ENCODE measurements at regions of chr2 and their contacts with region 1.

Region 1: DNA sequence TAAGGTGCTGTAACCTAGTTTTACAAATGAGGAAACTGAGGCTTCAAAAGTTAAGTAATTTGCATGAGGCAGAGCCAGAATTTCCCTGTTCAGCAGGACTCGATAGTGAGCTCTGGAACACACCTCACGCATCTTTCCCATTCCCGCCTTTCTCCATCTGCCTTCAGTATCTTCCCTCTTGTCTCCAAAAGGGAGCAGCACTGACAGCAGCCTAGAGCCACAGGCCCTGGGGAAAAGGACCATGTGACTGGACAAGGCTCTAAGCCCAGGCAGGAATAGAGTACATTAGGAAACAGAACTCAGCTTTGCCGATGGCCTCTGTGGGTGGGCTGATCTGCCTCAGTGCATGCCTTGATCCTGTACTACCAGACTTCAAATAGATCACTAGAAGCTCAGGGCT is 21.5 kb downstream of the GPR155 start:
- DNase-seq: no peak
- H3K4me3 ChIP-seq: no peak overlapping the region
- H3K27ac ChIP-seq: no peak overlapping the region
- H3K4me1 ChIP-seq: no peaks in the 10 kb centered on the region
- H3K27me3 ChIP-seq: no peaks in the 10 kb centered on the region
- CTCF ChIP-seq: no peak

Region 2: GRCh38 chr2:174522553-174522952 is 57.2 kb after region 1 on chr2:
- CTCF ChIA-PET with region 1: interaction called, 8 read pairs
- dilution Hi-C with region 1: no loop called
- in situ Hi-C with region 1: no loop called
- intact Hi-C with region 1: loop called (anchors 1 kb)
- DNase-seq: no peak
- H3K4me3 ChIP-seq: no peak overlapping the region
- H3K27ac ChIP-seq: no peak overlapping the region
- H3K4me1 ChIP-seq: no peaks in the 10 kb centered on the region
- H3K27me3 ChIP-seq: no peaks in the 10 kb centered on the region
- CTCF ChIP-seq: peak; percentile 20 to 41

Region 3: GRCh38 chr2:174546581-174547506 is 81.5 kb after region 1 on chr2:
- CTCF ChIA-PET with region 1: interaction called, 6 read pairs
- dilution Hi-C with region 1: no loop called
- in situ Hi-C with region 1: no loop called
- intact Hi-C with region 1: loop called (anchors 1 kb)
- DNase-seq: peak; percentile 17
- H3K4me3 ChIP-seq: no peak overlapping the region
- H3K27ac ChIP-seq: no peak overlapping the region
- H3K4me1 ChIP-seq: no peaks in the 10 kb centered on the region
- H3K27me3 ChIP-seq: no peaks in the 10 kb centered on the region
- CTCF ChIP-seq: peak; percentile 35 to 56

Region 4: GRCh38 chr2:174603280-174603679 is 138.0 kb after region 1 on chr2:
- CTCF ChIA-PET with region 1: interaction called, 19 read pairs
- dilution Hi-C with region 1: no loop called
- in situ Hi-C with region 1: loop called in 1 of 2 experiments (anchors 10 kb)
- intact Hi-C with region 1: loop called (anchors 1 kb)
- DNase-seq: peak; percentile 60
- H3K4me3 ChIP-seq: no peak overlapping the region
- H3K27ac ChIP-seq: no peak overlapping the region
- H3K4me1 ChIP-seq: no peaks in the 10 kb centered on the region
- H3K27me3 ChIP-seq: no peaks in the 10 kb centered on the region
- CTCF ChIP-seq: peak; percentile 37 to 61

Region 5: DNA sequence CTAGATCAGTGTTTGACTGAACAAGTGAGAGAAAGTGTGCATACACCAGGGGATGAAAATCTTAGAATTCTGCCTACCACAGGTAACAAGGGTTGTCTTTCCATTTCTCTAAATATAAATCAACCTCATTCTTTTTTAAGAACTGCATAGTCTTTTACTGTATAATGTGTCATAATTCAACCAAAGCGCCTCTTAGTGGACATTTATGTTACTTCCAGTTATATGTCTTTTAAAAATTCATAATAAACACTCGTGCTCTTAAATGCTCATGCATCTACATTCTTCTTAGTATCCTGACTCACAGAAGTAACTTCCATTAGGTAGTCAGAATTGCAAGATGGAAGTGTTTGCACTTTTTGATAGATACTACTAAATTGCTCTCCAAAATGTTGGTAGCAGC is 222.8 kb after region 1 on chr2:
- CTCF ChIA-PET with region 1: interaction called, 7 read pairs
- dilution Hi-C with region 1: no loop called
- in situ Hi-C with region 1: loop called in 1 of 2 experiments (anchors 25 kb)
- intact Hi-C with region 1: loop called (anchors 1 kb)
- DNase-seq: peak; percentile 16
- H3K4me3 ChIP-seq: no peak overlapping the region
- H3K27ac ChIP-seq: no peak overlapping the region
- H3K4me1 ChIP-seq: no peaks in the 10 kb centered on the region
- H3K27me3 ChIP-seq: peaks cover 10% of the 10 kb centered on the region
- CTCF ChIP-seq: peak; percentile 38 to 42

Region 6: DNA sequence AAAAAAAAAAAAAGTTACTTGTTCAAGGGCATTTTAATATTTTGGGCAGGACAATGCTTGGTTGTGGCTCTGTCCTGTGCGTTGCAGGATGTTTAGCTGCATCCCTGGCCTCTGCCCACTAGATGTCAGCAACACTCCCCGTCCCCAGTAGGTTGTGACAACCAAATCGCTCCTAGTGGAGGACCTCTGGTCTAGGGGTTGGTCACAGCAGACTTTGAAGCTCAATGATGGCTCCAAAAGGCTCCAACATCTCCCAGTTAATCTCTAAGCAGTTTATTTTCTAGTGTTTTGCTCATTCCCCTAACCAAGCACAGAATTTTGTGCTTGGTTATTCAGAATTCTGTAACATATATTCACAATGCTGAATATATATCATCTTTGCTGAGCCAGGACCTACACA is 231.9 kb after region 1 on chr2:
- CTCF ChIA-PET with region 1: no interaction called
- dilution Hi-C with region 1: no loop called
- in situ Hi-C with region 1: loop called in 1 of 2 experiments (anchors 25 kb)
- intact Hi-C with region 1: no loop called
- DNase-seq: peak; percentile 40
- H3K4me3 ChIP-seq: no peak overlapping the region
- H3K27ac ChIP-seq: no peak overlapping the region
- H3K4me1 ChIP-seq: no peaks in the 10 kb centered on the region
- H3K27me3 ChIP-seq: peaks cover 7% of the 10 kb centered on the region
- CTCF ChIP-seq: peak; percentile 73 to 88

Measured in mammary epithelial cell (primary cell).